ENCODE measurements at regions of chr20 and their contacts with region 1.

Region 1: DNA sequence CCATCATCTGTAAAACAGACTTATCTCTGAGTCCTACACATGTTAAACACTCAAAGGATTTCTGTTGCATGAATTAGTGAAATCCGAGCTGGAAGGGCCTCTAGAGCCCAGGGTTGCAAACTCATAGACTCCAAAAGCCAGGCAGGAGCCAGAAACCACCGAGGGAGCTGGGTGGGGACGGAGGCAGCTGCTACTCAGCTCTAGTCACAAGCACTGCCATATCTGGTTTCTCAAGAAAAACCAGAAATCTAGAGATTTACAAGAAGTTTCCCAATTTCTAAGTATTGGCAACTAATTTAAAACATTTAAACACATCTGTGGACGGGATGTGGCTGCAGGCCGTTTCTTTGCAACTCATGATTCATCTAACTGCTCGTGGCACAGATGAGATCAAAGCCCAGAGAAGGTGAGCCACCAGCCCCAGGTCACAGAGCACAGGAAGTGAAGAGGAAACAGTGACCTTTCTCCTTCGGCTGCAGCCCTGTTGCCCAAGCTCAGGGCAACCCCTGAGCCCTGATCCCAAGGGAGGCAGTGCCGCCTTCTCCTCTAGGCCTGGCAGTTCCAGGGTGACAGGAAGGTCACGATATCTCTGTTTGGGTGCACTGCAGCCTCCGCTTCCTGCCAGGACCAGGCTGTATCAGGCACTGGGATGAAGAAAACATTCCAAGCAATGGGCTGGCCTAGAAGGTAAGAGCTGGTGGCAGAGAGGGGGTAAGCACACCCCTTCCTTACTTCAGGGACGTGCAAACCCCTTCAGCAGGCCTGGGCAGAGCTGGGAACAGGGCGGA is 26.4 kb upstream of the PTGIS start:
- DNase-seq: peak; percentile 55 to 80 (median 67)
- ATAC-seq: peak; percentile 40 to 80 (median 79)
- H3K4me3 ChIP-seq: peak overlapping the region in 1 of 12 donors; percentile 38
- H3K27ac ChIP-seq: peak overlapping the region; percentile 26 to 87 (median 70)
- H3K4me1 ChIP-seq: peaks cover 0 to 60% (median 33%) of the 10 kb centered on the region in 12 donors
- H3K27me3 ChIP-seq: no peaks in the 10 kb centered on the region
- CTCF ChIP-seq: no peak
- POLR2A ChIP-seq: no peak

Region 2: GRCh38 chr20:49549811-49550551 is 44.4 kb before region 1 on chr20:
- intact Hi-C with region 1: loop called in 3 of 10 experiments (anchors 2 to 5 kb)
- DNase-seq: no peak
- ATAC-seq: no peak
- H3K4me3 ChIP-seq: no peak overlapping the region
- H3K27ac ChIP-seq: no peak overlapping the region
- H3K4me1 ChIP-seq: peaks cover 0 to 29% (median 10%) of the 10 kb centered on the region in 12 donors
- H3K27me3 ChIP-seq: no peaks in the 10 kb centered on the region
- CTCF ChIP-seq: no peak
- POLR2A ChIP-seq: no peak

Region 3: DNA sequence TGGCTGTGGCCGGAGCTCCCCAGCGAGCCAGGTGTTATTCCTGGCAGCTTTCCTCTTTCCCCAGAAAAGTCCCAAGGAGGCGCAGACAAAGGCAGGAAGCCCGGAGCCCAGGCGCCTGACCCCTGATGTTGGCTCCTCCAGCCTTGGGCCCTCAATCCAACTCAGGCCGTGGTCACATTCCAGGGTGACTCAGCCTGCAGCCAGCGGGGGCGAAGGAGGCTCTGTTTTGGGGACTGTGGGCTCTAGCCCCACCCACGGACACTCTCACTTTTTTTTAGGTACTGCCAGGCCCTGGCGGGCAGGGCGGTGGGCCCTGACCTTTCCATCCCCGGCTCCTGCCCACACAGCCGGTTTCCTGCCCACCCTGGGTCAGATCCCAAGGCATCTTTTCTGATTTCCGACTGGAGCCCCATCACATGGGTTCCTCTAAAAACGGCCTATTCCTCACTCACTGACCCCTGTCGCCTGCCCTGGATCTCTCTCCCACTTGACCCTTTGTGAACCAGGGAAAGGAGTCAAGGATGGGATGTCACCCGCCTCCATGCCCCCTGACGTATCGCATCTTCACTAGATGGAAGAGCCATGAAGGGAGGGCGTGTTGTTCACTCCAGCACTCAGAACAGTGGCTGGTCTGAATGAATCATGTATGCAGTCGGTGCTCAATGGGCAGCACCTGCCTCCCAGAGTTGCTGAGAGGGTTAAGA is 31.9 kb before region 1 on chr20:
- intact Hi-C with region 1: loop called in 3 of 10 experiments (anchors 5 kb)
- DNase-seq: peak; percentile 84 to 88 (median 86)
- ATAC-seq: peak; percentile 53 to 97 (median 93)
- H3K4me3 ChIP-seq: peak overlapping the region in 2 of 12 donors; percentile 6 to 10
- H3K27ac ChIP-seq: peak overlapping the region; percentile 36 to 87 (median 68)
- H3K4me1 ChIP-seq: peaks cover 1 to 56% (median 19%) of the 10 kb centered on the region in 12 donors
- H3K27me3 ChIP-seq: peaks cover 0 to 11% (median 3%) of the 10 kb centered on the region in 9 donors
- CTCF ChIP-seq: no peak
- POLR2A ChIP-seq: no peak

Region 4: DNA sequence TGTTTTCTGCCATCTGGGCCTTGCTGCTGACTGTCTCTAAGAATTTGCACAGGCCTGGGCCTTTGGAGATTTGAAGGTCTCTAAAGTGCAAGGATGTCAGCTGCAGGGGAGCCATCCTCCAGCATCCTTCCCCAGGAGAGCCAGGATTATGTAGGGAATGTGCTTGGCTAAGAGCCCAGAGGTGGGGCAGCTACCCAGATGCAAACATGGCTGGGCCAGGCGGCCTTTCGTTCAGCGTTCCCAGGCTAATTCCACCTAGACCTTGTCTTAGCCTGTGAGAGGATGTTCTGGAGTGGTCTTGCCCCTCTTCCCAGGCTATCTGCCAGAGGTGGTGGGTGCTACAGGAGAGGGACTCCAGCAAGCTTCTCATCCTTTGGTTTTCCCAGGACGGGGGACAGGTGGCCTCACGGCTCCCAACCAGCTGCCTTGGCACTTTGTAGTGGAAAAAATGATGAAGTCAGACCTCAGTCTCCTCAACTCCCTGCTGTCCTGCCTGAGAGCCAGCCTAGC is 18.7 kb before region 1 on chr20:
- intact Hi-C with region 1: loop called in 1 of 10 experiments (anchors 2 kb)
- DNase-seq: peak in 3 of 5 donors; percentile 53 to 61 (median 58)
- ATAC-seq: peak; percentile 54 to 80 (median 67)
- H3K4me3 ChIP-seq: no peak overlapping the region
- H3K27ac ChIP-seq: peak overlapping the region in 9 of 12 donors; percentile 0 to 77 (median 68)
- H3K4me1 ChIP-seq: peaks cover 0 to 36% (median 12%) of the 10 kb centered on the region in 12 donors
- H3K27me3 ChIP-seq: peaks cover 0 to 10% (median 0%) of the 10 kb centered on the region in 9 donors
- CTCF ChIP-seq: no peak
- POLR2A ChIP-seq: no peak